ENCODE measurements at regions of chr11 and their contacts with region 1.

Region 1: GRCh38 chr11:77994412-77995362 is at the start of gene INTS4:
- DNase-seq: peak; percentile 99
- H3K4me3 Mint-ChIP-seq: peak within 1 kb of the TSS; percentile 97
- H3K27ac Mint-ChIP-seq: peak within 1 kb of the TSS; percentile 92
- H3K4me1 Mint-ChIP-seq: peaks cover 21% of the 10 kb centered on the region
- H3K27me3 Mint-ChIP-seq: peaks cover 2% of the 10 kb centered on the region
- total RNA-seq, gene INTS4: 60.0 and 60.8 TPM in 2 replicates

Region 2: GRCh38 chr11:77637345-77638165 is 357.1 kb before region 1 on chr11 and contains the start of gene CLNS1A:
- intact Hi-C with region 1: loop called (anchors 1 kb)
- DNase-seq: peak; percentile 94
- H3K4me3 Mint-ChIP-seq: peak within 1 kb of the TSS; percentile 97
- H3K27ac Mint-ChIP-seq: peak within 1 kb of the TSS; percentile 95
- H3K4me1 Mint-ChIP-seq: peaks cover 30% of the 10 kb centered on the region
- H3K27me3 Mint-ChIP-seq: no peaks in the 10 kb centered on the region
- total RNA-seq, gene CLNS1A: 177 and 186 TPM in 2 replicates

Region 3: DNA sequence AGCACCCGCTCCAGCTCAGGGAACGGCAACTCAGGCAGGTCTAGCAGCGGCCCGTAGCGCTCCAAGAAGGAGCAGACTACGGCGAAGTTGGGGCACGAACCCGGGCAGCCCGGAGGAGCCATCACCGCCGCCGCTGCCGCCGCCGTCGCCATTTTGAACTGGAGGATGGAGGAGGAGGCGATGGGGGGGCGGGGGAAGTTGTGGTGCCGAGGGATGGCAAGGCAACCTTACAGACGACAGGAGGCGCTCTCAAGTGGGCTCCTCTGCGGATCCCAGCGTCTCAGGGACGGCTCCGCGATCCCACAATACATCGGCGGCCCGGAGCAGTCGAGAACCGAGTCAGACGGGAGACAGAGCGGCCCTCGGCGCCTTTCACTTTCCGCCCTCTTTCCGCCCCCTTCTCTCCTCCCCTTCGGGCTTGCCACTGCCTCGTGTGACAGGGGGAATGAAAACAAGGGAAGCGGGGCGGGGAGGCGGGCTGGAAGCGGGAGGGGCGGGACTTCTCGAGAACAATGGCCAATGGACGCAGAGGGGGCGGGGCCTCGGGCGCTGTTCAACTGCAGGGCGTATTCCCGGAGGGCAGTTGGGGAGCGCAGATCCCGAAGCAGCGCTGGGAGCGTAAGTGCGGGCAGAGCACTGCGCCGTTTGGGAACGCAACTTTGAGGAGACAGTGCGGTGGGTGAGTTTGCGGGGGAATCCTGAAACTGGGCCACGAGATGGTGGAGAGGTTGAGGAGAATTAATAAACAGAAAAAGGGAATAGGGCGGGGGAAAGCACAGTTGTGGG is 173.9 kb before region 1 on chr11 and contains the starts of genes AAMDC and RSF1:
- intact Hi-C with region 1: loop called (anchors 1 kb)
- DNase-seq: peak; percentile 98
- H3K4me3 Mint-ChIP-seq: peak within 1 kb of the TSS; percentile 98
- H3K27ac Mint-ChIP-seq: peak within 1 kb of the TSS; percentile 92
- H3K4me1 Mint-ChIP-seq: peaks cover 29% of the 10 kb centered on the region
- H3K27me3 Mint-ChIP-seq: no peaks in the 10 kb centered on the region
- total RNA-seq, gene AAMDC: 1.3 and 1.4 TPM in 2 replicates
- total RNA-seq, gene RSF1: 45.3 and 47.6 TPM in 2 replicates

Region 4: DNA sequence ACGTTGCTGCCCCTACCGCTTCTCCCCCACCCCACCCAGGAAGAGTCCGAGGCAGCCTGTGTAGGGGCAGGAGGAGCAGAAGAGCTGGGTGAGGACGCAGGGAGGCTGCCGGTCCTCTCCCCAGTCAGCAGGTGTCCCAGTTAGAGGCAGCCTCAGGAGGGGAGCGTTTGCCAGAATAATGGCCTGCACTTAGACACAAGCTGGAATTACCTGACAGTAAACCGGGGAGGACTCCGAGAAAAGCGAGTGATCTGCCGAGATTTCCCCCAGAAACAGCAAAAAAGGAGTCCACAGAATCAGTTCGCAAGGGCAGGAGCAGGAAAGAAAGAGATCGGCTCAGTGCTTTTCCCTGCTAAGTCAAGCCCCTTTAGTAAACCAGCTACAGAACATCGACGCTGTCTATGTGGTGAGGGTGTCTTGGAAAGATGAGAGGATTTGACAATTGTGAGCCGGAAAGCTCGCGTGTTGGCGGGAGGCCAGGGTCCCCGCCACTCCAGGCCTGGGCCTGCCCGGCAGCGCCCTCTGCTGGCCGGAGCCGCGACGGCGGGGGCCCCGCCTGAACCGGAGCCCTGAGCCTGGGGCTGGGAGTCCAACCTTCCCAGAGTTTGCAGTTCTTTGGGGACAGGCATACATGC is 51.3 kb after region 1 on chr11:
- intact Hi-C with region 1: loop called (anchors 2 kb)
- DNase-seq: peak; percentile 94
- H3K4me3 Mint-ChIP-seq: peak overlapping the region; percentile 45
- H3K27ac Mint-ChIP-seq: no peak overlapping the region
- H3K4me1 Mint-ChIP-seq: peaks cover 11% of the 10 kb centered on the region
- H3K27me3 Mint-ChIP-seq: peaks cover 4% of the 10 kb centered on the region

Region 5: DNA sequence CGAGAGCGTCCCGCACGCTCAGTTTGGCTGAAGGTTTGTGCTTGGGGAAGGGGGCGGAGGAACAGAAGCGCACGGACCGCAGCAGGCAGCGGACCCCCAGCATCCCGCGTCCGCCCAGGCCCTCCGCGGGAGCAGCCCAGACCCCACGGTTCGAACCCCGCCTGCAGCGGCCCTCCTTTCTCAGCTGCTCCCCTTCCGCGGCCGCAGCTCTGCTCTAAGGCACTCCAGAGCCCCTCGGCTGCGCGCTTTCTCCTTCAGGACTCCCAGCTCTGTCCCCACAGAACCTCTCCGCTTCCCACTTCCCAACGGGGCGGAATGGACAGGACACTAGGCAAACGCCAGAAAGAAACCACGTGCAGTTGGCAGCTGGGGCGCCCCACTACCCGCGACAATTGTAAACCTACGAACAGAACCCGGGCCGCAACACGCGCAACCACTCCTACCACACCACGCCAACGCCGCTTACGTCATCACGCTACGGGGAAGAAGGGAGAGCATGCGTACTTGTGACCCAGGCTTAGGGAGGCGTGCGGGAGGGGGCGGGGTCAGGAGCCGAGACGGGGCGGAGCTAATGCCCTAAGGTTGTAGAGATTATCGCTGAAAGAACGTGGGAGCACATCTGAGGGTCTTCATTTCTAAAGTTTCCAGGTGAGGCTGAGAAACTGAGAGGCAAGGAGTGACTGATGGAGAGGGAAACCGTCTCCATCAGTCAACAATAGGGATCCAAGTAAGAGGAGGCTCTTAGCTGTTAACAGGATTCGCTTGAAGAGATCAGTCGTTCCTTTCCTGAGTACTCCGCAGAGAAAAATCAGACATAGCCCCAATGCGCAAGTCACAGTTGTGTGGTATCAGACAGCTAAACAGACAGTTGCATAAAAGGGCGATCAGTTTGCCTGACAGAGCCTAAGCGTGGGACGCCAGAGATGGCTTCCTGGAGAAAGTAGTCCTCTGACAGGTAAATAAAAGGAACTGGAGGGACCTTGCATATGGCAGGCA is 580.0 kb after region 1 on chr11 and contains the start of gene NARS2:
- intact Hi-C with region 1: loop called (anchors 2 kb)
- DNase-seq: peak; percentile 99
- H3K4me3 Mint-ChIP-seq: peak within 1 kb of the TSS; percentile 94
- H3K27ac Mint-ChIP-seq: peak within 1 kb of the TSS; percentile 92
- H3K4me1 Mint-ChIP-seq: peaks cover 28% of the 10 kb centered on the region
- H3K27me3 Mint-ChIP-seq: no peaks in the 10 kb centered on the region
- total RNA-seq, gene NARS2: 38.0 and 43.3 TPM in 2 replicates